ENCODE measurements at regions of chrX and their contacts with region 1.

Region 1: GRCh38 chrX:67114635-67115034 is 429.2 kb upstream of the AR start:
- DNase-seq: no peak
- H3K4me3 ChIP-seq: no peak overlapping the region
- CTCF ChIP-seq: no peak
- POLR2A ChIP-seq: no peak

Region 2: GRCh38 chrX:66074920-66075879 is 1039.4 kb before region 1 on chrX:
- intact Hi-C with region 1: loop called (anchors 10 kb)
- DNase-seq: peak in 1 of 2 donors; percentile 24
- H3K4me3 ChIP-seq: no peak overlapping the region
- CTCF ChIP-seq: no peak
- POLR2A ChIP-seq: no peak

Region 3: DNA sequence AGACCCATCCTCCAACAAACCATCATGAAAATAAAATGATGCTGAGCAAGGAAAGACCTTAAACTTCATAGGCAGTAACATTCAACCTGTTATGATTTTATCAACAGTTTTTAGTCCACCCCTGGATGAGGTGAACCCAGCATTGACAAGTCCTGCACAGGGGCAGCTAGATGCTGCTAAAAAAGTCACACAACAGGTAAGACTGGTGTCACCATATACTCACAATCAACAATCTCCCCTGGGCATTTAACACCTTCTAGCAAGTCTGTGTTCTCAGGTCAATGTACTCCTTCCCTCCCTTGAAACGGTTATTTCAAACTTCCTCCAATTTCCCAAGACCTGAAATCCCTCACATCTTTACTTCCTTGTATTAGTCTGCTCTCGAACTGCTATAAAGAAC is 1036.8 kb after region 1 on chrX:
- intact Hi-C with region 1: no loop called
- DNase-seq: no peak
- H3K4me3 ChIP-seq: no peak overlapping the region
- CTCF ChIP-seq: no peak
- POLR2A ChIP-seq: no peak

Measured in lower leg skin (tissue), 4 donors.